ENCODE measurements at regions of chr17 and their contacts with region 1.

Region 1: DNA sequence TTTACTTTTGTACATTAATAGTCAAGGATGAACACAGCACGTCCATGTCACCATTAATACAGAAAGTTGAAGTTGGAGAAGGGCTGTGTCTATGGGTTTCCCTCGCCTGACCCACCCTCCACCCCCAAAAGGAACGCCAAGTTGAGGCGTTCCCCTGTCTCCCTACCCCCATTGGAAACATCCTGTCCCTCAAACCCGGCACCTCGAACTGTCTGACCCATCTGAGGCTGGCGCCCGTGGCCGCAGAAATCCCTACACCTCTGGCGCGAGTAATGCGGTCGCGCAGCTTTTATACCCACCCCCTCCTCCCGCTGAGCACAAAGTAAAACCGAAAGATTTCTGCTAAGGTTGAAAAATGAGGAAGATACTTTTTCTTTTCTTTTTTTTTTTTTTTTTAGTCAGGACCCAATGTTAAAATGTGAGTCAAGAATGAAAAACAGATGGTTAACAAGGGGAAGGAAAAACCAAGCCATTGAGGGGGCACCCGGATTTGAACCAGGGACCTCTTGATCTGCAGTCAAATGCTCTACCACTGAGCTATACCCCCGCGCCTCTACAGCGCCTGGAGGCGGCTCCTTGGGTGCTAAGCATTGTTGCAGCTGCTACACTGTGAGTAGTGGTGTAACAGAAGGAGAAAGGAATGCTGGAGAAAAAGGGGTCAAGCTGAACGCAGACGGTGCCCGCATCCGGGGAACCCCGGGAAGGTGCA is 887 bp upstream of the LASP1 start:
- DNase-seq: peak; percentile 86
- ATAC-seq: peak; percentile 77 to 79

Region 2: DNA sequence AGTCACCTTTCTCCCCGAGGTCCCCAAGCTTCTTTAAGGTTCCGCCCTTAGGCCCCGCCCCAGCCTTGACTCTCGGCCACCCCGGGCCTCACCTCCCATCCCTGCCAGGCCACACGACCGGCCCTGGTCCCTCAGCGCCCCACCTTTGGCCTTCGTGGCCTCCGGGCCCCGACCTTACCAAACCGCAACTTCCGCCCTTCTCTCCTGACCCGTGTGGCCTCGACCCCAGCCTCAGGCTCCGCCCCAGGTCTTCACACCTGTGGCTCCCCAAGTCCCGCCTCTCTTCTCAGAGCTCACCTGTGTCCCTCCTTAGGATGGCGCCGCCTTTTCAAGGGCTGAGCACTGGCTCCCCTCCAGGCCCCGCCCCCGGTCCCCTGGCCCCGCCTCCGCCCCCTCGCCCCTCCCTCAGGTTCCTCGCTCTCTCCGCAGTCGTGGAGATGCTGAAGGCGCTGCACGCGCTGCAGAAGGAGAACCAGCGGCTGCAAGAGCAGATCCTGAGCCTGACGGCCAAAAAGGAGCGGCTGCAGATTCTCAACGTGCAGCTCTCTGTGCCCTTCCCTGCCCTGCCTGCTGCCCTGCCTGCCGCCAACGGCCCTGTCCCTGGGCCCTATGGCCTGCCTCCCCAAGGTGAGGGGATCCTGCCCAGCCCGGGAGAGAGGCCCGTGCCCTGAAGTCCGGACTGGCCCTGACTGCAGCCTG is 148.9 kb before region 1 on chr17:
- intact Hi-C with region 1: no loop called
- DNase-seq: no peak
- ATAC-seq: no peak

Region 3: GRCh38 chr17:38908676-38909181 is 39.8 kb after region 1 on chr17:
- intact Hi-C with region 1: loop called (anchors 5 kb)
- DNase-seq: peak; percentile 54
- ATAC-seq: peak; percentile 9 to 20

Region 4: GRCh38 chr17:38922538-38923297 is 53.7 kb after region 1 on chr17:
- intact Hi-C with region 1: loop called in 1 of 2 experiments (anchors 5 kb)
- DNase-seq: peak; percentile 83
- ATAC-seq: peak; percentile 45 to 56

Region 5: GRCh38 chr17:39144416-39144840 is 275.5 kb after region 1 on chr17:
- intact Hi-C with region 1: loop called in 1 of 2 experiments (anchors 10 kb)
- DNase-seq: peak; percentile 90
- ATAC-seq: peak; percentile 84

Region 6: GRCh38 chr17:39153599-39154051 is 284.7 kb after region 1 on chr17:
- intact Hi-C with region 1: loop called (anchors 10 kb)
- DNase-seq: peak; percentile 87
- ATAC-seq: peak; percentile 87 to 92

Measured in left cardiac atrium (tissue), 4 donors.